CD8-positive, alpha-beta T cell (primary cell): ENCODE measurements at regions of chr1 and their contacts with region 1.

Region 1: DNA sequence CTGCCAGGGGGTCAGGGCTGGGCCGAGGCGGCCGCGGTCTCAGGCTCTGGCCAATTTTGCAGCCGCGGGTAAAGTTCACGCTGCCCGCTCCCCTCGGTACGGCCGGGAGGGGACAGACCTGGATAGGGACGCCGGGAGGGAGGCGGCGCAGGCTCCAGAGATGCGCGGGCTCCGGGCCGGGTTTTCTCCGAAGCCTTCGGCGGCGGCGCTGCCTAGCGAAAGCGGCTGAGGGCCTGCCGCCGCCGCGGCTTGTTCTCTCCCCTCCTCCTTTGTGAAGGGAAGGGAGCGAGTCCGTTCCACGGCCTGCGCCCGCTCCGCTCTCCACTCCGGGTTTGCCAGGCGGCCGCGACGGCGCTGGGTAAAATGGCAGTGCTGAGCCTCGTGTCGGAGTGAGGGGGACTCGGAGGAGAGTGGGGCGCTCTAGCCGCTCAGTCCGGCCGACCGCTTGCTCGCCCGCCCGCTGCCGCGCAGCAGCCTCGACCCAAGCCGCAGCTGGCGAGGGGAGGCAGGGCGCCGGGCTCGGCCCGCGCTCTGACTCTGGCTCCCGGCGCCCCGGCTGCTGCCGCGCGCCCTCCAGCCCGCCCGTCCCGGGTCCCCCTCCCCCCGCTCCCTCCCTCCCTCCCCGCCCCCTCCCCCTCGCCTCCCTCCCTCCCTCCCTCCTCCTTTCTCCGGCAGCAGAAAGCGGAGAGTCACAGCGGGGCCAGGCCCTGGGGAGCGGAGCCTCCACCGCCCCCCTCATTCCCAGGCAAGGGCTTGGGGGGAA is at the start of gene ARID1A:
- DNase-seq: peak; percentile 92 to 98 (median 95)
- ATAC-seq: peak; percentile 59
- H3K4me3 ChIP-seq: peak within 1 kb of the TSS; percentile 74 to 86
- H3K4me3 Mint-ChIP-seq: peak within 1 kb of the TSS; percentile 93
- H3K27ac ChIP-seq: peak within 1 kb of the TSS; percentile 44 to 72
- H3K27ac Mint-ChIP-seq: peak within 1 kb of the TSS; percentile 94
- H3K4me1 ChIP-seq: peaks cover 51% of the 10 kb centered on the region
- H3K4me1 Mint-ChIP-seq: peaks cover 35% of the 10 kb centered on the region
- H3K27me3 ChIP-seq: no peaks in the 10 kb centered on the region
- H3K27me3 Mint-ChIP-seq: no peaks in the 10 kb centered on the region
- CTCF ChIP-seq: no peak
- total RNA-seq, gene ARID1A: 104 to 105 TPM

Region 2: DNA sequence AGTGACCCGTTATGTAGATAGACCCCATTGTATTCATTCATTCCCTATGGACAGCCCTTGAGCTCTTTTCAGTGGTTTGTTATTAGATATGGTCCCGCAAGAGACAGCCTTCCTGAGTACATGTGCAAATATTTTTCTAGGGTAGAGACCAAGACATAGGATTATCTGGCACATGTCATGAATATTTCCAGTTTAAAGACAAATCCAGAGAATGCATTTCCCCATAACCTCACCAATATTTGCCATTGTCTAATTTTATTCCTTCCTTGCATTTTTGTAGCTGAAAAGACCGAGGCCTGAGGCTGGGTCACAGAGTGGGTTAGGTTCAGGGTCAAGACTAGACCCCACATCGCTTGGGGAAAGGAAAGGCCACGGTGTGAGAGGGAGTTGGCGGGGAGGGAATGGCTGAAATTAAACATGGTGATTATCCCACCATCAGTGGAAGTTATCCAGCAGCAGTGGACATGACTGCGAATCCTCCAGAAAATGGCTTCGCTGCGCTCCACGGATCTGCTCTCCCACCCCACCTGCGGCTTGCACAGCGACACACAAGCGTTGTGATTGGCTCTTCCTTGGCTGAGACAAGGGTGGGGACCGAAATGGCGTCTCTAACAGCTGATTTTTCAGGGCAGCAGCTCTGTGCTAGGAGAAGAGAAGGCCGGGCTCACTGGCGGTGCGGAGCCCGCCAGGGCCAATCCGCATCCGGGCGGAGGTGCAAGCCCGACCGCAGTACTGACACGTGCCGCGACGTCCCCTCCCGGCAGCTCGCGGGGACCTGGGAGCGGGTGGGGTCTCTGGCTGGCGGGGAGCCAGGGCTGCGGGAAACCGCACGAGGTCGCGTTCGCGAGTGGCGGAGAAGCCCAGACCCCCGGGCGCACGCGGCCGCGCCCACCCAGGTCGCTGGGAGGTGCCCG is 773.2 kb before region 1 on chr1:
- CTCF ChIA-PET with region 1: no interaction called
- POLR2A ChIA-PET with region 1: no interaction called
- intact Hi-C with region 1: no loop called
- DNase-seq: peak in 7 of 9 experiments; percentile 38 to 78 (median 62)
- ATAC-seq: peak; percentile 75
- H3K4me3 ChIP-seq: peak overlapping the region; percentile 57 to 63
- H3K4me3 Mint-ChIP-seq: peak overlapping the region; percentile 88
- H3K27ac ChIP-seq: peak overlapping the region; percentile 6 to 24
- H3K27ac Mint-ChIP-seq: peak overlapping the region; percentile 70
- H3K4me1 ChIP-seq: peaks cover 27% of the 10 kb centered on the region
- H3K4me1 Mint-ChIP-seq: peaks cover 29% of the 10 kb centered on the region
- H3K27me3 ChIP-seq: no peaks in the 10 kb centered on the region
- H3K27me3 Mint-ChIP-seq: no peaks in the 10 kb centered on the region
- CTCF ChIP-seq: no peak

Region 3: GRCh38 chr1:26472901-26473845 is 222.4 kb before region 1 on chr1:
- CTCF ChIA-PET with region 1: interaction called, 3 read pairs
- POLR2A ChIA-PET with region 1: interaction called, 5 read pairs
- intact Hi-C with region 1: loop called (anchors 2 to 10 kb)
- DNase-seq: peak; percentile 94 to 99 (median 98)
- ATAC-seq: peak; percentile 86
- H3K4me3 ChIP-seq: peak overlapping the region; percentile 48 to 72
- H3K4me3 Mint-ChIP-seq: peak overlapping the region; percentile 85
- H3K27ac ChIP-seq: peak overlapping the region; percentile 93 to 94
- H3K27ac Mint-ChIP-seq: peak overlapping the region; percentile 78
- H3K4me1 ChIP-seq: peaks cover 32% of the 10 kb centered on the region
- H3K4me1 Mint-ChIP-seq: peaks cover 51% of the 10 kb centered on the region
- H3K27me3 ChIP-seq: no peaks in the 10 kb centered on the region
- H3K27me3 Mint-ChIP-seq: no peaks in the 10 kb centered on the region
- CTCF ChIP-seq: no peak

Region 4: GRCh38 chr1:26627954-26628353 is 67.6 kb before region 1 on chr1:
- CTCF ChIA-PET with region 1: interaction called, 3 read pairs
- POLR2A ChIA-PET with region 1: interaction called, 13 read pairs
- intact Hi-C with region 1: no loop called
- DNase-seq: no peak
- ATAC-seq: no peak
- H3K4me3 ChIP-seq: no peak overlapping the region
- H3K4me3 Mint-ChIP-seq: no peak overlapping the region
- H3K27ac ChIP-seq: no peak overlapping the region
- H3K27ac Mint-ChIP-seq: no peak overlapping the region
- H3K4me1 ChIP-seq: no peaks in the 10 kb centered on the region
- H3K4me1 Mint-ChIP-seq: no peaks in the 10 kb centered on the region
- H3K27me3 ChIP-seq: no peaks in the 10 kb centered on the region
- H3K27me3 Mint-ChIP-seq: no peaks in the 10 kb centered on the region
- CTCF ChIP-seq: no peak

Region 5: DNA sequence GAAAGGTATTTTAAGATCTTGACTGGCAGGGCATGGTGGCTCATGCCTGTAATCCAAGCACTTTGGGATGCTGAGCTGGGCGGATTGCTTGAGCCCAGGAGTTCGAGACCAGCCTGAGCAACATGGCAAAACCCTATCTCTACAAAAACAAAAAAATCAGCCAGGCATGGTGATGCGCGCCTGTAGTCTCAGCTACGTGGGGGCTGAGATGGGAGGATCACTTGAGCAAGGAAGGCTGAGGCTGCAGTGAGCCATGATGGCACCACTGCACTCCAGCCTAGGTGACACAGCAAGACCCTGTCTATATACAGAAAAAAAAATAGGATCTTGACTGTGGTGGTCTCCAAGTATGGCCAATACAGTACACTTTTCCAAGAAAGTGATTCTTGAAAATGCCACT is 16.2 kb after region 1 on chr1:
- CTCF ChIA-PET with region 1: no interaction called
- POLR2A ChIA-PET with region 1: interaction called, 6 read pairs
- intact Hi-C with region 1: loop called in 1 of 2 experiments (anchors 1 kb)
- DNase-seq: no peak
- ATAC-seq: no peak
- H3K4me3 ChIP-seq: no peak overlapping the region
- H3K4me3 Mint-ChIP-seq: no peak overlapping the region
- H3K27ac ChIP-seq: no peak overlapping the region
- H3K27ac Mint-ChIP-seq: no peak overlapping the region
- H3K4me1 ChIP-seq: peaks cover 68% of the 10 kb centered on the region
- H3K4me1 Mint-ChIP-seq: peaks cover 84% of the 10 kb centered on the region
- H3K27me3 ChIP-seq: no peaks in the 10 kb centered on the region
- H3K27me3 Mint-ChIP-seq: no peaks in the 10 kb centered on the region
- CTCF ChIP-seq: no peak

Region 6: GRCh38 chr1:26744075-26744959 is 48.8 kb after region 1 on chr1:
- CTCF ChIA-PET with region 1: interaction called, 13 read pairs
- POLR2A ChIA-PET with region 1: interaction called, 72 read pairs
- intact Hi-C with region 1: loop called (anchors 1 to 2 kb)
- DNase-seq: peak; percentile 42 to 93 (median 79)
- ATAC-seq: peak; percentile 91
- H3K4me3 ChIP-seq: peak overlapping the region; percentile 22 to 31
- H3K4me3 Mint-ChIP-seq: peak overlapping the region; percentile 66
- H3K27ac ChIP-seq: peak overlapping the region; percentile 13 to 84
- H3K27ac Mint-ChIP-seq: peak overlapping the region; percentile 91
- H3K4me1 ChIP-seq: peaks cover 90% of the 10 kb centered on the region
- H3K4me1 Mint-ChIP-seq: peaks cover 89% of the 10 kb centered on the region
- H3K27me3 ChIP-seq: no peaks in the 10 kb centered on the region
- H3K27me3 Mint-ChIP-seq: no peaks in the 10 kb centered on the region
- CTCF ChIP-seq: no peak

Region 7: GRCh38 chr1:27341525-27342252 is 646.2 kb after region 1 on chr1 and contains the start of gene SYTL1:
- CTCF ChIA-PET with region 1: no interaction called
- POLR2A ChIA-PET with region 1: no interaction called
- intact Hi-C with region 1: loop called (anchors 5 kb)
- DNase-seq: peak; percentile 38 to 84 (median 72)
- ATAC-seq: peak; percentile 64
- H3K4me3 ChIP-seq: peak within 1 kb of the TSS; percentile 85 to 91
- H3K4me3 Mint-ChIP-seq: peak within 1 kb of the TSS; percentile 97
- H3K27ac ChIP-seq: peak within 1 kb of the TSS; percentile 69 to 86
- H3K27ac Mint-ChIP-seq: peak within 1 kb of the TSS; percentile 93
- H3K4me1 ChIP-seq: peaks cover 38% of the 10 kb centered on the region
- H3K4me1 Mint-ChIP-seq: peaks cover 55% of the 10 kb centered on the region
- H3K27me3 ChIP-seq: no peaks in the 10 kb centered on the region
- H3K27me3 Mint-ChIP-seq: no peaks in the 10 kb centered on the region
- CTCF ChIP-seq: no peak
- total RNA-seq, gene SYTL1: 103 to 113 TPM